ENCODE measurements at regions of chr6 and their contacts with region 1.

Region 1: DNA sequence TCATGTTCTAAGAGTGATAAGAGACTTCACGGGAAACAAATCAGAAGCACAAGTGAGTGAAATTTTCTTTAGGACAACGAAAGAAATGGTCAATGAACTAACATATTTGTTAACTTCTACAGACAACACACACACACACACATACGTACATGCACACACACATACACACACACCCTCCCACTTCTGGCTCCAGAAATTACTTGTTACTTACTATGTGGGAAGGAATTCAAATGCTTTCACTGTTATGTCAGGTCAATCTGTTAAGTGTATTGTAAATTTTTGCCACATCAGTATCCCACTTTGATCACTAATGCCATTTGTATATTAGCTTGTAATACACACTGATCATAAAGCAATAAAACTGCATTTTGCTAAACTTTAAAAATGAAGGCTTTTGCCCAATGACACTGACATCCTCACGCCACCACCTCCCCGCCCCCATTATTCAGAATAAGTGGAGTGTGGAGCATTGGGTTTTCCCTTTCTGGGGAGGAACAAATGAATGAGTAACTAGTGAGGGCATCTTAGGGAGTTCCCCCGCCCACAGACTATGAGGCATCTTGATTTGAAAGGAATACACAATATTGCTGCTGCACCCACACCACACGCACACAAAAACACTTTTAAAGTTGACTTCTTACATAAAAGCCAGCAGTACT is 76.2 kb downstream of the ATXN1 start:
- DNase-seq: no peak
- ATAC-seq: no peak
- H3K4me3 ChIP-seq: no peak overlapping the region
- H3K27ac ChIP-seq: no peak overlapping the region
- H3K4me1 ChIP-seq: peaks cover 47 to 56% of the 10 kb centered on the region in 2 donors
- H3K27me3 ChIP-seq: no peaks in the 10 kb centered on the region
- CTCF ChIP-seq: no peak
- POLR2A ChIP-seq: no peak

Region 2: GRCh38 chr6:16657768-16658167 is 27.3 kb before region 1 on chr6:
- in situ Hi-C with region 1: no loop called
- intact Hi-C with region 1: loop called (anchors 2 kb)
- DNase-seq: no peak
- ATAC-seq: no peak
- H3K4me3 ChIP-seq: no peak overlapping the region
- H3K27ac ChIP-seq: peak overlapping the region in 1 of 4 donors; percentile 58
- H3K4me1 ChIP-seq: peaks cover 26 to 31% of the 10 kb centered on the region in 2 donors
- H3K27me3 ChIP-seq: no peaks in the 10 kb centered on the region
- CTCF ChIP-seq: no peak
- POLR2A ChIP-seq: no peak

Region 3: GRCh38 chr6:16698997-16699868 is 14.2 kb after region 1 on chr6:
- in situ Hi-C with region 1: no loop called
- intact Hi-C with region 1: loop called (anchors 1 kb)
- DNase-seq: no peak
- ATAC-seq: peak; percentile 89 to 96
- H3K4me3 ChIP-seq: no peak overlapping the region
- H3K27ac ChIP-seq: peak overlapping the region; percentile 40 to 59 (median 54)
- H3K4me1 ChIP-seq: peaks cover 40 to 43% of the 10 kb centered on the region in 2 donors
- H3K27me3 ChIP-seq: no peaks in the 10 kb centered on the region
- CTCF ChIP-seq: no peak
- POLR2A ChIP-seq: no peak